Aorta (tissue), 5 donors: ENCODE measurements at regions of chr11 and their contacts with region 1.

Region 1: DNA sequence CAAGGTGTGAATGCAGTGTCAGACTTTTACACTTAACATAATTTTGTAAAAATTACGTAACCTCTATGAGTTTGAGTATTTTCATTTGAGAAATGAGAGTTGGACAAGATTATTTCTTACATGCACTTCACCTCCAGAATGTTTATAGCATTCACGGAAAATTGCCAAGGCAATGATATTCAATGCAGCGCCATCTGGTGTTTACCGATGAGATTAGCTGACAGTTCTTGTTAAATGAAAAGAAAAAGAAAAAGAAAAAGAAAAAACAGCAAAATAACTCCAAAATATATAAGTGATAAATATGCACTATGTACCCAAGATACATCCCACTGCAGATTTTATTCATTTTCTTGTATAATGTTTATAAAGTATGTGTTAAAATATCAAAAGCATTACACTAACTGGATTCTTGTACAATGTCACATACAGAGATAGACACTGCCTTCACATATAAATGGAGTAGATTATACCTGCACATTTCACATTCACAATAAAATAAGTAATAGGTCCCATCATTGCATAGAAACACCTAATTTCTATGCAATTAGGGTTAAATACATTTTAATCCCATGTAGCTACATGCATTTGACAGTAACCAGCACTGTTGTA is 976.3 kb upstream of the FAT3 start:
- DNase-seq: no peak
- ATAC-seq: no peak
- H3K4me3 ChIP-seq: no peak overlapping the region
- H3K27ac ChIP-seq: no peak overlapping the region
- H3K4me1 ChIP-seq: no peaks in the 10 kb centered on the region
- H3K27me3 ChIP-seq: no peaks in the 10 kb centered on the region

Region 2: DNA sequence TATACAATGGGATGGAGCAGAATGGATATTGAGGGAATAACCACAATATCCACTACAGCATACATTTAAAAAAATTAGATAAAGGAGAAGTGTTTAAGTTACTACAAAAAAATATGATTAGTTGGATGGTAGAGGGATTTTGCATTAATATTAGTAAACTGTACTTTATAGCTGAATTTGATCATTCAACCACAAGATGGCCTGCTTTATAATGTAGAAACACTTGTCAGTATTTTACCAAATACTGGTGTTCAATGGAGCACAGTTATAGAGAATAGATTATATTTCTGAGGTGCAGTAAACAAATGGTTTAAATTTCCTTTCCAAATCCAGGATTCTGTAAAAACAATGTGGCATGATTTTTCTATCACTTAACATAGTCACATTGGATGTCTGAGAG is 206.7 kb before region 1 on chr11:
- intact Hi-C with region 1: loop called in 1 of 2 experiments (anchors 5 kb)
- DNase-seq: no peak
- ATAC-seq: no peak
- H3K4me3 ChIP-seq: no peak overlapping the region
- H3K27ac ChIP-seq: no peak overlapping the region
- H3K4me1 ChIP-seq: no peaks in the 10 kb centered on the region
- H3K27me3 ChIP-seq: no peaks in the 10 kb centered on the region

Region 3: DNA sequence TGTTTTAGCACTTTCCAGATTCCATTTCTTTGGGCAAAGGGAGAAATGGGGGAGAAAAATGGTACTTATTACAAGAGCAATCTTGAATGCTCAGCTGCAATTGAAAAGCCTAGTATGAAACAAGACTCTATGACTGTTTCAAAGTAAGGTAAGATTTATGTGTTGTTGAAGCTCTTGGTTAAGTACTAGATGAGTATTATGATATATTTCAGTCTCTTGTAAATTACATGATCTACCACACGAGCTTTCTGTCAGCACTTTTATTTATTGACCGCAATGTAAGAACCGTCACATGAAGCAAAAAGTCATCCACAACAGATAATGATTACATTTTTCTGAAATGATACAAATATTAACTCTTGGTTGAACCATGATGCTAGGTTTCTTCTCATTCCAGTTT is 118.7 kb before region 1 on chr11:
- intact Hi-C with region 1: no loop called
- DNase-seq: no peak
- ATAC-seq: no peak
- H3K4me3 ChIP-seq: no peak overlapping the region
- H3K27ac ChIP-seq: no peak overlapping the region
- H3K4me1 ChIP-seq: peaks cover 2 to 7% of the 10 kb centered on the region in 2 donors
- H3K27me3 ChIP-seq: no peaks in the 10 kb centered on the region

Region 4: DNA sequence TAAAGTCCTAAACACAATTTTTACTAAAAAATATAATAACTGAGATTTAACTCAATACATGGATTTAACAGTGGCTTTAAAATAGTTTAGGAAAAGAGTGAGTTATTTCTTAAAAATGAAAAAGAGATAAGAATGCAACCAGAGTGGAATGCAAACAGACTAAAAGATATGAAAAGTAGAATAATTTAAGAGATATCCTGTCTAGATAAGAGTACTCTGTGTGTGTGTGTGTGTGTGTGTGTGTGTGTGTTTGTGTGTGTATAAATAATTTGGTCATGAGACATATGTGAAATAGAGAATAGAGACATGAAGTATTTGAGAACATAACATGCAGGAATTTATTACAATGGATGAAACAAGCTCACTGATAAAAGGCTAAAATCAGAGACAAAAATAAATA is 38.6 kb before region 1 on chr11:
- intact Hi-C with region 1: no loop called
- DNase-seq: no peak
- ATAC-seq: no peak
- H3K4me3 ChIP-seq: no peak overlapping the region
- H3K27ac ChIP-seq: no peak overlapping the region
- H3K4me1 ChIP-seq: no peaks in the 10 kb centered on the region
- H3K27me3 ChIP-seq: no peaks in the 10 kb centered on the region

Region 5: GRCh38 chr11:91326280-91326679 is 78.0 kb after region 1 on chr11:
- intact Hi-C with region 1: no loop called
- DNase-seq: no peak
- ATAC-seq: no peak
- H3K4me3 ChIP-seq: no peak overlapping the region
- H3K27ac ChIP-seq: no peak overlapping the region
- H3K4me1 ChIP-seq: no peaks in the 10 kb centered on the region
- H3K27me3 ChIP-seq: no peaks in the 10 kb centered on the region